ENCODE measurements at regions of chr3 and their contacts with region 1.

Region 1: DNA sequence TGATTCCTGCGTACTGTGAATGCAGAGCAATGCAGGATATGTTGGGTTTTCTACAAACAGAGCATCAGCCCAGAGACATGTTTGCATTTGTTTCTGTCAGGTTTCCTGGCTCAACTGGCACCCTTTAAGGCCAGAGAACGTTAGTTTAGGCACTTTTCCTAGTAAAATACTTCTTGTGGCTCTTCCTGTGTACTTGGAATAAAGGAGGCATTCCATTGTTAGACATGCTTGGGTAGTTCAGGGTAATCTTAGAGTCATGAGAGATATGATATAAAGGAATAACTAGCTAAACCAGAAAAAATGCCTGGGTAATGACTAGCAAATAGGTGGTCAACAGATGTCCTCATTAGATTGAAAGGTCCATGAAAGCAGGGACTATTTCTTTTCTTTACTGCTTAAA is 60.4 kb upstream of the RBM5 start:
- DNase-seq: no peak
- H3K4me3 ChIP-seq: no peak overlapping the region
- H3K27ac ChIP-seq: no peak overlapping the region
- H3K4me1 ChIP-seq: no peaks in the 10 kb centered on the region
- H3K27me3 ChIP-seq: no peaks in the 10 kb centered on the region
- CTCF ChIP-seq: no peak
- EP300 ChIP-seq: no peak
- POLR2A ChIP-seq: no peak

Region 2: DNA sequence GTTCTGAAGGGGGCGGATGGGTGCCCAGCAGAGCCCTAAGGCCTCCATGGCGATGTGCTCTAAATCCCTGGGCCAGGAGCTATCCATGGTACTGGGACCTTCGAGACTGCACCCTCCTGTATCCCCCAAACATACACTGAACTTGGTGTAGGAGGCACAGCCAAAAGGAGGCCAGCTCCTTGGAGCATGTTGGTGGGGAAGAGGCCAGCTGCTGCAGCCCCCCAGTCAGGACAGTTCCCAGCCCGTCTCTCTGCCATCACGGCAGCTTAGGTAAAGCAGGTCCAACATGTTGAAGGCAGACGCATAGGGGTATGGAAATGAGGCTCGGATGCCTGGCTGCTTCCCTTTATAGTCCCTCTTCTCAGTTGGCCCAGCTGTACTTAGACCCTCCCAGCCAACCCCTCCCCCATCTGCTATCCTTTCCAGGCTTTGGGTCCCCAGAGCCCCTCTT is 160.4 kb before region 1 on chr3:
- intact Hi-C with region 1: loop called in 1 of 4 experiments (anchors 10 kb)
- DNase-seq: no peak
- H3K4me3 ChIP-seq: no peak overlapping the region
- H3K27ac ChIP-seq: no peak overlapping the region
- H3K4me1 ChIP-seq: no peaks in the 10 kb centered on the region
- H3K27me3 ChIP-seq: no peaks in the 10 kb centered on the region
- CTCF ChIP-seq: no peak
- EP300 ChIP-seq: no peak
- POLR2A ChIP-seq: no peak